ENCODE measurements at regions of chr12 and their contacts with region 1.

Region 1: GRCh38 chr12:29499235-29499634 is 1.7 kb upstream of the OVCH1 start:
- DNase-seq: no peak
- ATAC-seq: no peak
- H3K4me3 ChIP-seq: no peak overlapping the region
- H3K27ac ChIP-seq: no peak overlapping the region
- H3K4me1 ChIP-seq: no peaks in the 10 kb centered on the region
- H3K27me3 ChIP-seq: no peaks in the 10 kb centered on the region
- CTCF ChIP-seq: no peak

Region 2: GRCh38 chr12:28268608-28269229 is 1230.5 kb before region 1 on chr12:
- intact Hi-C with region 1: loop called in 1 of 10 experiments (anchors 5 kb)
- DNase-seq: no peak
- ATAC-seq: no peak
- H3K4me3 ChIP-seq: no peak overlapping the region
- H3K27ac ChIP-seq: no peak overlapping the region
- H3K4me1 ChIP-seq: no peaks in the 10 kb centered on the region
- H3K27me3 ChIP-seq: no peaks in the 10 kb centered on the region
- CTCF ChIP-seq: no peak